Tibial artery (tissue), 4 donors: ENCODE measurements at regions of chr22 and their contacts with region 1.

Region 1: DNA sequence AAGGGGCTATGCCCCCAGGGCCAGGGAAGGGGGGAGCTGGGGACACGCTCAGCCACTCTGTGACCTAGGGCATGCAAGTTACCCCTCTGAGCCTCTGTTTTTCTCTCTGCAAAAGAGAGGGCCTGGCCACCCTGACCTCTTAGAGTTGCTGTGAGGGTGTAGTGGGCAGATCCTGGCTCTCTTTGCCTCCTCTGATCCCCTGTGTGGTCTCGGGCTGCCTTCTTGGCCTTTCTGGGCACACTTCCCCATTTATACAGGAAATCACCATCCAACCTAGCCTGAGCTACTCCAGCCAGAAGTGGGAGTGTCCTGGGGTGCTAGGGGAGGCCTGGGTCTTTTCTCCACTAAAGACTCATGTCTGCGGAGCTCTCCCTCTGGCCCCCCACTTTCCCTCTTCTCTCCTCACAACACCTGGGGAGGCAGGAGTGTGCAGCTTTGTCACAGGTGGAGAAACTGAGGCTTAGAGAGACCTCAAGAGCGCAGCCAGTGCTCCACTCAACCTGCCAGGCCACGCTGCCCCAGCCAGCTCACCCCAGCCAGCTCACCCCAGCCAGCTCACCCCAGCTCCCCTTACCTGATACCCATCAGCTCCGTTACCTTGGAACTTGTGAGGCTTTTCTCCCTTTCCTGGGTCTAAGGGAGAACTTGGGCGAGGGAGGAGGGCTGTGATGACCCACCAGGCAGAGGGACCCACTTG is 1.4 kb downstream of the AIFM3 start:
- DNase-seq: no peak
- H3K4me3 ChIP-seq: no peak overlapping the region
- H3K27ac ChIP-seq: no peak overlapping the region
- H3K4me1 ChIP-seq: peaks cover 0 to 17% (median 11%) of the 10 kb centered on the region in 4 donors
- H3K27me3 ChIP-seq: peaks cover 0 to 40% of the 10 kb centered on the region in 2 donors
- CTCF ChIP-seq: no peak

Region 2: GRCh38 chr22:20810645-20811044 is 157.8 kb before region 1 on chr22:
- intact Hi-C with region 1: no loop called
- DNase-seq: peak in 1 of 2 donors; percentile 5
- H3K4me3 ChIP-seq: no peak overlapping the region
- H3K27ac ChIP-seq: no peak overlapping the region
- H3K4me1 ChIP-seq: no peaks in the 10 kb centered on the region
- H3K27me3 ChIP-seq: no peaks in the 10 kb centered on the region
- CTCF ChIP-seq: no peak

Region 3: DNA sequence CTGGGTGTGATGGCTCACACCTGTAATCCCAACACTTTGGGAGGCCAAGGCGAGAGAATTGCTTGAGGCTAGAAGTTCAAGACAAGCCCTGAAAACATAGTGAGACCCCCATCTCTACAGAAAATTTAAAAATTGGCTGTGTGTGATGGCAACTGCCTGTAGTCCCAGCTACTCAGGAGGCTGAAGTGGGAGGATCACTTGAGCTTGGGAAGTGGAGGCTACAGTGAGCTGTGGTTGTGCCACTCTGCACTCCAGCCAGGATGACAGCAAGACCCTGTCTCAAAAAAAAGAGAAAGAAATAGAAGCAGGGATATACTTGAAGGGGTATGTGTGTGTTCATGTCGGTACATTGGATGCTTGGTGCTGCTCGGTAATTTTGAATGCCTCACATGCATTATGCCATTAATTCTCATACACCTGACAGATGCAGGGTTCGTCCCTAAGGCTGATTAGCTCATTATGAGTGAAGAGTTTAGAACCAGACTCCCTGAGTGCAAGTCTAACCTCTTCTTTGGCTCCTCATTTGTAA is 37.2 kb before region 1 on chr22:
- intact Hi-C with region 1: loop called (anchors 1 kb)
- DNase-seq: no peak
- H3K4me3 ChIP-seq: no peak overlapping the region
- H3K27ac ChIP-seq: no peak overlapping the region
- H3K4me1 ChIP-seq: peaks cover 0 to 28% (median 16%) of the 10 kb centered on the region in 4 donors
- H3K27me3 ChIP-seq: no peaks in the 10 kb centered on the region
- CTCF ChIP-seq: no peak

Region 4: GRCh38 chr22:21102659-21103267 is 134.3 kb after region 1 on chr22:
- intact Hi-C with region 1: no loop called
- DNase-seq: peak; percentile 31 to 74
- H3K4me3 ChIP-seq: no peak overlapping the region
- H3K27ac ChIP-seq: no peak overlapping the region
- H3K4me1 ChIP-seq: peaks cover 0 to 3% (median 0%) of the 10 kb centered on the region in 4 donors
- H3K27me3 ChIP-seq: peaks cover 0 to 47% of the 10 kb centered on the region in 2 donors
- CTCF ChIP-seq: peak; percentile 57